PC-9 (cell line): ENCODE measurements at regions of chr1 and their contacts with region 1.

Region 1: DNA sequence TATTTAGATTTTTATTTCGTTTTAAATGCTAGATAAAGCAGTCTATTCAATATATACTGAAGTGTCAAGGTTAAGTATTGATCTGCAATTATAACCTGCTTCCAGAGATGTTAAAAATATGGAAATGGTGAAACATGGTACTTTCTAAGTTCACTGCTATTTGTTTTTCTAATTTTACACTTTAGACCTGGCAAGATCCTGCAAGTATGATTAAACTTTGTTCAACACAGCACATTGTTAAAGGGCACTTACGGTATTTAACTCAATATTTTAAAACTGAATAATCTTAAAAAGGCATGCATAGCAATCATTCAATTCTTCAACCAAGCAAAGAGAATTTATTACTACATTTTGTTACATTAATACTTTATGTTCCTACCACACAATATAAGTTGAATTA is 35.7 kb upstream of the ZZZ3 start:
- DNase-seq: no peak
- H3K4me3 ChIP-seq: no peak overlapping the region
- H3K27ac ChIP-seq: no peak overlapping the region
- H3K4me1 ChIP-seq: no peaks in the 10 kb centered on the region
- H3K27me3 ChIP-seq: no peaks in the 10 kb centered on the region
- CTCF ChIP-seq: no peak

Region 2: GRCh38 chr1:77579547-77579946 is 138.6 kb before region 1 on chr1:
- CTCF ChIA-PET with region 1: no interaction called
- POLR2A ChIA-PET with region 1: no interaction called
- intact Hi-C with region 1: loop called (anchors 10 kb)
- DNase-seq: no peak
- H3K4me3 ChIP-seq: no peak overlapping the region
- H3K27ac ChIP-seq: no peak overlapping the region
- H3K4me1 ChIP-seq: no peaks in the 10 kb centered on the region
- H3K27me3 ChIP-seq: no peaks in the 10 kb centered on the region
- CTCF ChIP-seq: peak; percentile 43